ENCODE measurements at regions of chr6 and their contacts with region 1.

Region 1: GRCh38 chr6:113375950-113376846 is 480.9 kb upstream of the MARCKS start:
- DNase-seq: no peak
- H3K4me3 ChIP-seq: no peak overlapping the region
- H3K27ac ChIP-seq: no peak overlapping the region
- H3K4me1 ChIP-seq: peaks cover 9% of the 10 kb centered on the region
- H3K27me3 ChIP-seq: no peaks in the 10 kb centered on the region
- CTCF ChIP-seq: no peak
- POLR2A ChIP-seq: no peak

Region 2: DNA sequence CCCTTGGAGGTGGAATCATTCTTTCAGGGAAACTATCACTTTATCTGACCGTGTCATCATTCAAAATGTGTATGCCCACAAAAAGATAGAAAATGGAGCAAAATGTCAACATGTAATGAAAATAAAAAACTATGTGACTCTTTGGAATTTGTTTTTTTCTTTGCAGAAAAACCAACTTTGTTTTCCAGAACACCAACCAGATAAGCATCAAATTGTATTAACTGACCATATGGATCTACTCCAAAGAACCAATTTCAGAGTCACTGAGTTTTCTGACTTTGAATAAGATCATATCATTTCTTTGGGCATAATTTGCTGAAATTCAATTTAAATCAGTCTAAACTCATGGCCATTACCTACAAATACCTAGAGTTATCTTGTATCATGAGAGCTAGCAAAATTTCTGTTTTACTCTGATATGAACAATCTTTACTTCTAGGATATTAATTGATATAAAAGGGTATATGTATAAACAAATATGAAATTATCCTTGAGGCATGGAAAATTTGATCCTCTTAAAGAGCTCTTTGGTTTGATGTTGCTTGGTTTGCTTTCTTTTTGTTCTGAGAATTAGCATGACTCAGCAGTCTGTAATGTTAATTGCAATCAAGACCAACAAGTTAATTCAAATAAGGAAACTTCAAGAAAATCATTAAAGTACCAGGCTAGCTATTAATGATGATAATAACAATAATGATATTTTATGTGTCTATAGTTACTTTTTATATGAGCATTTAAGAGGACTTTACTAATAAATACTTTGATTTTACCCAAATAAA is 36.6 kb after region 1 on chr6:
- intact Hi-C with region 1: loop called (anchors 2 kb)
- DNase-seq: no peak
- H3K4me3 ChIP-seq: no peak overlapping the region
- H3K27ac ChIP-seq: no peak overlapping the region
- H3K4me1 ChIP-seq: peaks cover 17% of the 10 kb centered on the region
- H3K27me3 ChIP-seq: no peaks in the 10 kb centered on the region
- CTCF ChIP-seq: no peak
- POLR2A ChIP-seq: no peak

Region 3: GRCh38 chr6:113447088-113447831 is 71.1 kb after region 1 on chr6:
- intact Hi-C with region 1: no loop called
- DNase-seq: no peak
- H3K4me3 ChIP-seq: no peak overlapping the region
- H3K27ac ChIP-seq: no peak overlapping the region
- H3K4me1 ChIP-seq: peaks cover 4% of the 10 kb centered on the region
- H3K27me3 ChIP-seq: no peaks in the 10 kb centered on the region
- CTCF ChIP-seq: no peak
- POLR2A ChIP-seq: no peak